CD4-positive, alpha-beta memory T cell (primary cell): ENCODE measurements at regions of chr2 and their contacts with region 1.

Region 1: GRCh38 chr2:108637304-108637669 is 82.0 kb upstream of the RANBP2 start:
- DNase-seq: no peak
- H3K4me3 ChIP-seq: no peak overlapping the region
- H3K4me3 Mint-ChIP-seq: no peak overlapping the region
- H3K27ac ChIP-seq: no peak overlapping the region
- H3K27ac Mint-ChIP-seq: peak overlapping the region in 1 of 7 donors; percentile 48
- H3K4me1 ChIP-seq: peaks cover 78% of the 10 kb centered on the region
- H3K4me1 Mint-ChIP-seq: peaks cover 55 to 86% (median 66%) of the 10 kb centered on the region in 4 donors
- H3K27me3 ChIP-seq: no peaks in the 10 kb centered on the region
- H3K27me3 Mint-ChIP-seq: no peaks in the 10 kb centered on the region

Region 2: GRCh38 chr2:108485253-108485652 is 152.0 kb before region 1 on chr2:
- CTCF ChIA-PET with region 1: no interaction called
- POLR2A ChIA-PET with region 1: no interaction called
- intact Hi-C with region 1: no loop called
- DNase-seq: no peak
- H3K4me3 ChIP-seq: no peak overlapping the region
- H3K4me3 Mint-ChIP-seq: no peak overlapping the region
- H3K27ac ChIP-seq: no peak overlapping the region
- H3K27ac Mint-ChIP-seq: no peak overlapping the region
- H3K4me1 ChIP-seq: no peaks in the 10 kb centered on the region
- H3K4me1 Mint-ChIP-seq: peaks cover 0 to 4% (median 1%) of the 10 kb centered on the region in 4 donors
- H3K27me3 ChIP-seq: no peaks in the 10 kb centered on the region
- H3K27me3 Mint-ChIP-seq: no peaks in the 10 kb centered on the region

Region 3: DNA sequence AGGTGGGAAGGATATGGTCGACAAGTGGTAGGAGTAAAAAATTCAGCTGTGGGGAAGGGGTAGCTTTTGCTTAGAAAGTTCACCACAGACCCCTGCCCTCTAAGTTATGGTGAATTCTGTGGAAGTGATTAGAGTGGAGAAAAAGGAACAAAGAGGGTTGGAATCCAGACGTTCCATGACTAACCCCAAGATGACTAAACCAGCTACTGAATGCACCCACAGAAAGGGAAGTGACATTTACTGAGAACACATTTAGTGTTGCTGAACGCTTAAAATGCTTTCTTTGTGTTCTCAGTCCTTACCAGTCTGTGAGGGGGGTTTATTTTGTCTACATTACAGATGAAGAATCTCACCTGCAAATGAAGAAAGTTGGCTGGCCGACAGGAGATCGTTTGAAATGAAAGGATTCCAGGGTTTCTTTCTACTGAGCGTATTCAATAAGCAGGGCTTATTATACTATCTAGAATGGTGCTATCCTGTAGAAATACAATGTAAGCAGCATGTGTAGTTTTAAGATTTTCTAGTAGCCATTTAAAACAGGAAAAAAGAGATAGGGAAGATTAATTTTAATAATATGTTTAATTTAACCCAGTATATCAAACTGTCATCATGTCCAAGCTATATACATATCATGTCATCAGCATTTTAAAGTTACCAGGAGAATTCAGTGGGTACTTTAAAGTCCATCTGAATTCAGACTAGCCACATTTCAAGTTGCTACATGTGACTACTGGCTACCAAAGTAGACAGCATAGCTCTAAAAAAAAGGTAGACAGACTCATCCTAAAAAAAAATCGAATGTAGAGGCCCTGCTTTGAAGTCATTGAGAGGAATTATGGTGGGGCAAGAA is 42.9 kb before region 1 on chr2:
- CTCF ChIA-PET with region 1: interaction called, 12 read pairs
- POLR2A ChIA-PET with region 1: interaction called, 6 read pairs
- intact Hi-C with region 1: no loop called
- DNase-seq: no peak
- H3K4me3 ChIP-seq: no peak overlapping the region
- H3K4me3 Mint-ChIP-seq: no peak overlapping the region
- H3K27ac ChIP-seq: no peak overlapping the region
- H3K27ac Mint-ChIP-seq: peak overlapping the region in 3 of 7 donors; percentile 26 to 58 (median 38)
- H3K4me1 ChIP-seq: peaks cover 17% of the 10 kb centered on the region
- H3K4me1 Mint-ChIP-seq: peaks cover 15 to 28% (median 18%) of the 10 kb centered on the region in 4 donors
- H3K27me3 ChIP-seq: no peaks in the 10 kb centered on the region
- H3K27me3 Mint-ChIP-seq: no peaks in the 10 kb centered on the region

Region 4: DNA sequence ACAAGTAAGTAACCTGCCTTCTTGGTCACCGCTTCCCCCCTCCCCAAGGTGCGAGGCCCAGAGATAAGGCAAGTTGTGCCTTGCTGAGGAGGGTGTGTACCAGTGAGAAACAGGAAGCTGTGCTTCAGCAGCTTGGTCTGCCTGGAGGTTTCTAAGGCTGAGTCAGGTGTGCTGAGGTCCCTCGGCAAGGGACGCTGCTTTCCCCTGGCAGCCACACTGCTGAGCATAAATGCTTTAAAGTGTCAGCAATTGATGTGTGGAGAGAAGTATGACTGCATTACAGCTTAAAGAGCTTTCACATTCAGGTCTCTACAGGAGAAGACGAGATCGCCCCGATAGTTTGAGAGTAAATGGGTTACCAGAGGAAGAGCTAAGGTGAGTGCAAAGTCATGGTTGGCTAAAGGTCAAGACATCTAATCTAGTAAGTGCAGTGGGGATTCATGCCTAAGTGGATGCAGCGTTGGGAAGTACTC is 16.2 kb before region 1 on chr2:
- CTCF ChIA-PET with region 1: interaction called, 545 read pairs
- POLR2A ChIA-PET with region 1: interaction called, 704 read pairs
- intact Hi-C with region 1: loop called (anchors 1 kb)
- DNase-seq: peak; percentile 79 to 92 (median 84)
- H3K4me3 ChIP-seq: peak overlapping the region; percentile 65 to 86
- H3K4me3 Mint-ChIP-seq: peak overlapping the region; percentile 91 to 97 (median 92)
- H3K27ac ChIP-seq: peak overlapping the region; percentile 69
- H3K27ac Mint-ChIP-seq: peak overlapping the region; percentile 91 to 98 (median 96)
- H3K4me1 ChIP-seq: peaks cover 88% of the 10 kb centered on the region
- H3K4me1 Mint-ChIP-seq: peaks cover 52 to 86% (median 66%) of the 10 kb centered on the region in 4 donors
- H3K27me3 ChIP-seq: no peaks in the 10 kb centered on the region
- H3K27me3 Mint-ChIP-seq: no peaks in the 10 kb centered on the region

Region 5: GRCh38 chr2:109230941-109231420 is 593.7 kb after region 1 on chr2:
- CTCF ChIA-PET with region 1: no interaction called
- POLR2A ChIA-PET with region 1: no interaction called
- intact Hi-C with region 1: no loop called
- DNase-seq: no peak
- H3K4me3 ChIP-seq: no peak overlapping the region
- H3K4me3 Mint-ChIP-seq: no peak overlapping the region
- H3K27ac ChIP-seq: no peak overlapping the region
- H3K27ac Mint-ChIP-seq: no peak overlapping the region
- H3K4me1 ChIP-seq: no peaks in the 10 kb centered on the region
- H3K4me1 Mint-ChIP-seq: peaks cover 0 to 2% (median 0%) of the 10 kb centered on the region in 4 donors
- H3K27me3 ChIP-seq: peaks cover 12% of the 10 kb centered on the region
- H3K27me3 Mint-ChIP-seq: peaks cover 25 to 35% of the 10 kb centered on the region in 2 donors